Activated CD4-positive, alpha-beta T cell treated with anti-CD3 and anti-CD28 coated beads, Interleukin-2, amount 10 ng/mL, durations not matched to agents 7 days and 5 days (primary cell): ENCODE measurements at regions of chr3 and their contacts with region 1.

Region 1: GRCh38 chr3:141192345-141192744 is 39.3 kb upstream of the PXYLP1 start:
- DNase-seq: peak; percentile 96
- H3K4me3 Mint-ChIP-seq: no peak overlapping the region
- H3K27ac Mint-ChIP-seq: no peak overlapping the region
- H3K4me1 Mint-ChIP-seq: peaks cover 10% of the 10 kb centered on the region
- H3K27me3 Mint-ChIP-seq: peaks cover 21% of the 10 kb centered on the region

Region 2: DNA sequence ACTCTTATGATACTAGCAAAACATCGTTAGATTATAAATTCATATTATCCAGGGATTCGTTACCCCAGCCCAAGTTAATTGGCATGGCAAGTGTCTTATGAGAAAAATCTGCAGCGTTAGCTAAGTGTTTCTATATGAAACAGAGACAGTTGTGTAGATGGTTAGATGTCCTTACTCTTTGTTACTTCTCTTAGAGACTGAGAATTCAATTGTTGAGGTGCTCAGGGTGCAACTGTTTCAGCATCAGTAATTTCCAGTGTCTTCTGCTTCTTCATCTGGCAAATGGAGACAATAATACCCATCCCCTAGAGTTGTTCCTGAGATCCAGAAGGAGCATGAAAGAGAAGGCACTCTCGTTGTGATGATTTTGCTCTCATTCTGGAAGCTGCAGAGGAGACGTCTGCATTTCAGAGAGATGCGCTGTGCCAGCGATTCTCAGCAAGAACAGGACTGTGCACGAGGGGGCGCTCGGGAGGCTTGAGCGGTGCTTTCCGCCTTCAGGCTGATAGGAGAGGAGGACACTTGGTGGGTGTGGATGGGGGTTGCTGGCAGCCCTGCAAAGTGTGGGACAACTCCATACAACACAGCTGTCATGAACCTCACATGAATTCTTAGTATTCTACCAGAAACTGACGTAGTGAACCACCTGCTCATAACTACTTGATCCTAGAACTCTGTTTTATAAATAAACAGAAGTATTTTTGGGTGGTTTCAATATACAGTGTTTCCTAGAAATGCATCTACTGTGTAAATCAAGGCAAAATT is 180.9 kb before region 1 on chr3:
- CTCF ChIA-PET with region 1: interaction called, 19 read pairs
- POLR2A ChIA-PET with region 1: no interaction called
- DNase-seq: peak; percentile 81
- H3K4me3 Mint-ChIP-seq: no peak overlapping the region
- H3K27ac Mint-ChIP-seq: no peak overlapping the region
- H3K4me1 Mint-ChIP-seq: peaks cover 8% of the 10 kb centered on the region
- H3K27me3 Mint-ChIP-seq: peaks cover 30% of the 10 kb centered on the region

Region 3: GRCh38 chr3:141076797-141077571 is 115.4 kb before region 1 on chr3:
- CTCF ChIA-PET with region 1: no interaction called
- POLR2A ChIA-PET with region 1: no interaction called
- DNase-seq: peak; percentile 9
- H3K4me3 Mint-ChIP-seq: no peak overlapping the region
- H3K27ac Mint-ChIP-seq: no peak overlapping the region
- H3K4me1 Mint-ChIP-seq: peaks cover 5% of the 10 kb centered on the region
- H3K27me3 Mint-ChIP-seq: no peaks in the 10 kb centered on the region

Region 4: DNA sequence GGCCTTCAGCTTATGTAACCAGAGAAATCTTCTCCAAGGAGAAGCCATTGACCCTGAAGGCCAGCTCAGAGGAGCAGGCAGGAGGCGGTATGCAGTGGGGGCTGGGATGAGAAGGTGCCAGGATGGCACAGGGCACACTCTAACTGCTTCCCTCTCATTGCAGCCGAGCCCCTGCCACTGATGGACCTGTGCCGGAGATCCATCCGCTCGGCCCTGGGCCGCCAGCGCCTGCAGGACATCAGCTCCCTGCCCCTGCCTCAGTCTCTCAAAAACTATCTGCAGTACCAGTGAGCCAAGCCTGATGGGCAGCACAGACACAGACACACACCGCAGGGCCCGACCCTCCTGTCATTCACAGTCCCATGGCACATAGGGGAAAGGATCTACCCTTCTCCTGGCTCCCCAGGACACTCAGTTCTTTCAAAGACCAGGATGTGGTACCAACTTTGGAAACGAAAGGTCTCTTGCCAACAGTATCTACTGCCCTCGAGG is 45.3 kb before region 1 on chr3:
- CTCF ChIA-PET with region 1: no interaction called
- POLR2A ChIA-PET with region 1: no interaction called
- DNase-seq: no peak
- H3K4me3 Mint-ChIP-seq: no peak overlapping the region
- H3K27ac Mint-ChIP-seq: no peak overlapping the region
- H3K4me1 Mint-ChIP-seq: peaks cover 2% of the 10 kb centered on the region
- H3K27me3 Mint-ChIP-seq: peaks cover 2% of the 10 kb centered on the region

Region 5: GRCh38 chr3:141204343-141204742 is 12.0 kb after region 1 on chr3:
- CTCF ChIA-PET with region 1: no interaction called
- POLR2A ChIA-PET with region 1: no interaction called
- DNase-seq: no peak
- H3K4me3 Mint-ChIP-seq: no peak overlapping the region
- H3K27ac Mint-ChIP-seq: no peak overlapping the region
- H3K4me1 Mint-ChIP-seq: no peaks in the 10 kb centered on the region
- H3K27me3 Mint-ChIP-seq: peaks cover 22% of the 10 kb centered on the region